ENCODE measurements at regions of chr5 and their contacts with region 1.

Region 1: DNA sequence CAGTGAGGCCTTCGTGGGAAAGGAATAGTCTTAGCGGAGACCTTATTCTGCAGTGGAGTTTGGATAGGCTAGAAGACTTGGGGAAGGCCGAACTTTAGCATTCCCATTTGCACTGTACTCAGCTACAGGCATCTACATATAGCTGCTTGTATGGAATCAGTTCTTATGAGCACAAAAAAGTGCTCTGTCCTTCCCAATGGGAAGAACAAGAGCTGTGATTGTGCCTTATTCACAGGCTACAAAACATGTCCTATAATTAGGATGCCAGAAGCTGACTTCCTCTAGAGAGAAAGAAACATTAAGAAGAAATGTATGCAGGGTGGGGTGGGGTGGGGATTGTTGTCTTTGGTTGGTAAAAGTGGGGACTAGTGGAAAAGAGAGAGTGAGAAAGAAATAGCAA is 154.7 kb downstream of the ATP10B start:
- DNase-seq: no peak

Region 2: GRCh38 chr5:160743027-160743426 is 45.7 kb after region 1 on chr5:
- intact Hi-C with region 1: loop called (anchors 2 kb)
- DNase-seq: no peak

Measured in posterior cingulate gyrus (tissue), 11 donors.